Activated T-helper 2 cell treated with anti-CD3 and anti-CD28 coated beads, Interferon-gamma antibody, Interleukin-2, Interleukin-4, amounts not matched to agents 10 μg/mL and 5 μg/mL and 100 μg/mL, durations not matched to agents 14 hours and 24 hours and 36 hours (primary cell): ENCODE measurements at regions of chr1 and their contacts with region 1.

Region 1: GRCh38 chr1:37682334-37682987 is 9.9 kb upstream of the CDCA8 start:
- DNase-seq: peak; percentile 56
- H3K4me3 Mint-ChIP-seq: no peak overlapping the region
- H3K27ac Mint-ChIP-seq: no peak overlapping the region
- H3K4me1 Mint-ChIP-seq: peaks cover 3% of the 10 kb centered on the region
- H3K27me3 Mint-ChIP-seq: no peaks in the 10 kb centered on the region

Region 2: DNA sequence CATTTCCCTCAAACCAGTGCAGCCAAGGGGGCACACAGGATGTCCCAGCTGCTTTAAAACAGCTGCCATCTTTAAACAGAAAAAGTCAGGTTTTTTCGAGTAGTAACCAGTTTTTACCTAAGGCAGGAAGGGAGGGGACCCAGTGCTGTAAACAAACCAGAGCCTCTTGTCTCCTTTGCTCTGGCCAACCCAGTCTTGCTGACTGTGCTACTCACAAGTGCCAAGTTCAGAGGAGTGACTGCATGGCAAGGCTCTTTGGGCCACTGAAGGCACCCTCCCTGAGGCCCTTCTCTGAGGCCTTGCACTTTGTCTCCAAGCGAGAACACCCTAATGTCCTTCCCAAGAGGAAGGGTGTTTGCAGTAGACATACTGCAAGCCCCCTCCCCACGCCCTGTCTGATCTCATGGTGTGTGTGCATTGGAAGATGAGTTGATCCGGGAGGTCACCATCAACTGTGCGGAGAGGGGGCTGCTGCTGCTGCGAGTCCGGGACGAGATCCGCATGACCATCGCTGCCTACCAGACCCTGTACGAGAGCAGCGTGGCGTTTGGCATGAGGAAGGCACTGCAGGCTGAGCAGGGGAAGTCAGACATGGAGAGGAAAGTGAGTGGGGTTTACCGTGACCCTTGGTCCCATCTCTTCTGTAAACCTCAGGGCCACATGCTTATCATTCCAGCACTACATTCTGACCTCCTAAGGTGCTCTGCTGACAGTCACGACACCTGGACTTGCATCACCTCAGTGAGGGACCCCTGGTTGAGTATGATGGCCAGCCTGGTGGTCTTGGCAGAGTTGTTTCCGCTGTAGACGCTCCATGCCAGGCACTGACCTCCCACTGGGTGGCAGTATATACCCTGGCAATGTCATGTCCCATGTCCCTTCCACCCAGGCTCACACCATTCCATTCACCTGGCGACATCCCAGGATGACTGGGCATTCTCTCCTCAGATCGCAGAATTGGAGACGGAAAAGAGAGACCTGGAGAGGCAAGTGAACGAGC is 121.0 kb before region 1 on chr1:
- intact Hi-C with region 1: loop called (anchors 2 kb)
- DNase-seq: no peak
- H3K4me3 Mint-ChIP-seq: no peak overlapping the region
- H3K27ac Mint-ChIP-seq: no peak overlapping the region
- H3K4me1 Mint-ChIP-seq: peaks cover 7% of the 10 kb centered on the region
- H3K27me3 Mint-ChIP-seq: no peaks in the 10 kb centered on the region

Region 3: DNA sequence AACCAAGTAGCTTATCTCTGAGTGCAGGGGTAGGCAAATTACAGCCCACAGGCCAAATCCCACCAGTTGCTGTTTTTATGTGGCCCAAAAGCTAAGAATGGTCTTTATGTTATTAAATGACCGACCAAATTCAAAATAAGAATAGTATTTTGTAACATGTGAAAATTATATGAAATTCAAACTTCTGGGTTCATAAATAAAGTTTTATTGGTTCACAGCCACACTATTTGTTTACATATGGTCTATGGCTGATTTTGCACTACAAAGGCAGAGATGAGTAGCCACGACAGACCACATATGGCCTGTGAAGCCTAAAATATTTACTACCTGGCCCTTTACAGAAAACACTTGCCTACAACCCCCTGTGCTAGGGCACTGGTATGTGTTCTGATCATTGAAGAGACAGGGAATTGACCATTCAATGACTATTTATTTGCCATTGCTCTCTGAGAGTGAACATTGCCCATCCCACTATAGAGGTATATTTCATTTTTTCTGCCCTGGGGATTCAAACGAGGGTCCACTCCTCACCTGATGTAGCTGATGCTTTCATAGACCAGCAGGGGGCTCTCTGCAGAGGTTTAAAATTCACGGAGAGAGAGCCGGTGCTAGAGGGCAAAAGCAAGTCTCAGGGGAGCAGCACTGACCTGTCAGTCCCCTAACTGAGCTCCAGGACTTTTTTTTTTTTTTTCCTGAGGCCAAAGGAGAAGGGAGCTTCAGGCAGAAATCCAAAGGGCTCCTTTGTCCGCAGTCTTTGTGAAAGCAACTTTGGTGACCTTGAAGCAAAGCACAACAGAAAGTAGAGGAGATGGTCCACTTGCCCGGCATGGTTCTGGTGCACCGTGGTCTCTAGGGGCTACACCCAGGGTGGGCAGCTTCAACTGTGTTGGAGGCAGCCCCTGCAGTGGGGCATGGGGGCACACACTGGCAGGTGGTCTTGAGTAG is 79.4 kb before region 1 on chr1:
- intact Hi-C with region 1: loop called (anchors 1 kb)
- DNase-seq: no peak
- H3K4me3 Mint-ChIP-seq: no peak overlapping the region
- H3K27ac Mint-ChIP-seq: no peak overlapping the region
- H3K4me1 Mint-ChIP-seq: no peaks in the 10 kb centered on the region
- H3K27me3 Mint-ChIP-seq: peaks cover 8% of the 10 kb centered on the region